Calu3 (cell line): ENCODE measurements at regions of chr20 and their contacts with region 1.

Region 1: GRCh38 chr20:38472513-38473372 is at the start of gene RALGAPB:
- DNase-seq: peak; percentile 100
- H3K4me3 Mint-ChIP-seq: peak within 1 kb of the TSS; percentile 82
- H3K27ac Mint-ChIP-seq: peak within 1 kb of the TSS; percentile 55
- H3K4me1 Mint-ChIP-seq: peaks cover 31% of the 10 kb centered on the region
- H3K27me3 Mint-ChIP-seq: no peaks in the 10 kb centered on the region
- CTCF ChIP-seq: peak; percentile 45
- total RNA-seq, gene RALGAPB: 59.8 and 62.5 TPM in 2 replicates

Region 2: DNA sequence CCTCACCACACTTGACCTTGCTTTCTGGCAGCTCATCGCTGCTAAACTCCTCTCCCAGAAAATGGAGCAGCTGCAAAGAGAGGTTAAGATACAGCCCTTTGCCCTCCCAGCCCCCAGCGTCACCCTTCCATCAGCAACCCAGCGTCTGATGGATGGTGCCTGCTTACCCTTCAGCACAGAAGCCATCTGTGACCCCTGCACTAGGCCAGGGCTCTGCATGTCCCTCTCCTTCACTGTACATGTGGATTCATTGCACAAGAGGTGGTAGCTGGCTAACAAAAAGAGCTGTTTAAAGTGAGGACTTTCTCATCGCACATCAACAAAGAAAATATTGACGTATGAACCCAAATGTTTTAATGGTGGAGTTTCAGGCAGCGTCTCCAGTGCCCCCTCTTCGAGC is 114.2 kb before region 1 on chr20:
- CTCF ChIA-PET with region 1: no interaction called
- intact Hi-C with region 1: no loop called
- DNase-seq: no peak
- H3K4me3 Mint-ChIP-seq: no peak overlapping the region
- H3K27ac Mint-ChIP-seq: no peak overlapping the region
- H3K4me1 Mint-ChIP-seq: no peaks in the 10 kb centered on the region
- H3K27me3 Mint-ChIP-seq: peaks cover 45% of the 10 kb centered on the region
- CTCF ChIP-seq: no peak

Region 3: GRCh38 chr20:38434743-38435554 is 37.8 kb before region 1 on chr20 and contains the start of gene SNHG17:
- CTCF ChIA-PET with region 1: interaction called, 28 read pairs
- intact Hi-C with region 1: no loop called
- DNase-seq: peak; percentile 95
- H3K4me3 Mint-ChIP-seq: peak within 1 kb of the TSS; percentile 88
- H3K27ac Mint-ChIP-seq: peak within 1 kb of the TSS; percentile 90
- H3K4me1 Mint-ChIP-seq: peaks cover 24% of the 10 kb centered on the region
- H3K27me3 Mint-ChIP-seq: peaks cover 20% of the 10 kb centered on the region
- CTCF ChIP-seq: peak; percentile 100
- total RNA-seq, gene SNHG17: 111 and 114 TPM in 2 replicates

Region 4: GRCh38 chr20:38523697-38524096 is 51.0 kb after region 1 on chr20:
- CTCF ChIA-PET with region 1: no interaction called
- intact Hi-C with region 1: no loop called
- DNase-seq: no peak
- H3K4me3 Mint-ChIP-seq: no peak overlapping the region
- H3K27ac Mint-ChIP-seq: no peak overlapping the region
- H3K4me1 Mint-ChIP-seq: no peaks in the 10 kb centered on the region
- H3K27me3 Mint-ChIP-seq: no peaks in the 10 kb centered on the region
- CTCF ChIP-seq: no peak

Region 5: GRCh38 chr20:38875175-38875993 is 402.6 kb after region 1 on chr20:
- CTCF ChIA-PET with region 1: no interaction called
- intact Hi-C with region 1: no loop called
- DNase-seq: no peak
- H3K4me3 Mint-ChIP-seq: no peak overlapping the region
- H3K27ac Mint-ChIP-seq: no peak overlapping the region
- H3K4me1 Mint-ChIP-seq: peaks cover 22% of the 10 kb centered on the region
- H3K27me3 Mint-ChIP-seq: peaks cover 28% of the 10 kb centered on the region
- CTCF ChIP-seq: no peak